ENCODE measurements at regions of chr10 and their contacts with region 1.

Region 1: DNA sequence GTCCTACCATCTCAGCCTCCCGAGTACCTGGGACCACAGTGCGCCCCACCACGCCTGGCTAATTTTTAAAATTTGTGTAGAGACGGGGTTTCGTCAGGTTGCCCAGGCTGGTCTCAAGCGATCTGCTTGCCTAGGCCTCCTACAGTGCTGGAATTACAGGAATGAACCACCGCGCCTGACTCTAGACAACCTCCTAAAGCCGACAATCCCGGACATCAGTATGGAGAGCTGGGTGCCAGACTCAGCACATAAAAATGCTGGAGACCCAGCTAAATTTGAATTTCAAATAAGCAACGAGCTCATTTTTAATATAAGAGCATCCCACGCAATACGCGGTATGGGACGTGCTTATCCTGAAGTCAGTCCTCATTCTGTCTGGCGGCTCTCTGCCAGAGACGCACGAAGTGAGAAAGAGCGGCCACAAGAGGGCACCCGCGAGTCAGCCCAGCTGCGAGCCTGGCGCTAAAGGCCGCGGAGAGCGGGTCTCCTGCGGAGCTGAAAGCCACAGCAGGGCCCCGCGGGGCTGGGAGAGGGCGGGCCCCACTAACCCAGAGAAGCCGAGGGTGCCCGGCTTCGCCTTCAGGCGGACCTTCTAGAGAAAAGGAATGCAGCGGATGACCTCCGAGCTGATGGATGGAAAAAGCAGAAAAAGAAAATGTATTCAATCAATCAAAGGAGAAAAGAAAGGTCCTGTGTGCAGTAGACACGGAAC is 7.0 kb downstream of the CALY start:
- DNase-seq: peak; percentile 90
- H3K4me3 Mint-ChIP-seq: peak overlapping the region; percentile 21
- H3K27ac Mint-ChIP-seq: peak overlapping the region; percentile 80
- H3K4me1 Mint-ChIP-seq: peaks cover 9% of the 10 kb centered on the region
- H3K27me3 Mint-ChIP-seq: peaks cover 87% of the 10 kb centered on the region

Region 2: DNA sequence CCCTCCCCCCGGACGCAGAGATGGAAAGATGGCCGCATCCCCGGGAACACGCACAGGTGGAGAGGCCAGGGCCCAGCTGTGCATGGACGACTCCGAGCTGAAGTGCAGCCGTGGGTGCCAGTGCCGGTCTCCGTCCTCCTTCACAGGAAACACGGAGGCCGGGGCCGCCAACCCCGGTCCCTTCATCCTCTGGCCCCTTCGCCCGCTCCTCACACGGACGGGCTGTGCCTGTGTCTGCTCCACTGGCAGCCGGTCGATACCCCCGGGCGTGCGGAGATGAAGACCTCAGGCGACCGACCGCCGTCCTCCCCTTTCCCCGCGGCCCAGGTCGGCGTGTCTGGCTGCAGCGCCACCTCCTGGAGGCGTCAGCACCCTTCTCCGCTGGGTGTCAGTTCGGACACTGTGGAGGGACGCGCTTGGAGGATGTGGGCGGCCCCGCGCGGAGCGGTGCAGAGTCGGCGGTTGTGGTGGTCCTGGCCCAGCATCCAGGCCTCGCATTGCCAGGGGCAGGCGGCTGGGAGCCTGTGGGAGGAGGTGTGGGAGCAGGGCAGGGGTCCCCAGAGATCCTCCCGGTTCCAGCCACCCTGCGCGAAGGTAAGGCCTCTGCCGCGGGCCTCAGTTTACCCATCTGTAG is 11.0 kb before region 1 on chr10:
- CTCF ChIA-PET with region 1: interaction called, 10 read pairs
- DNase-seq: peak; percentile 78
- H3K4me3 Mint-ChIP-seq: peak overlapping the region; percentile 35
- H3K27ac Mint-ChIP-seq: no peak overlapping the region
- H3K4me1 Mint-ChIP-seq: peaks cover 8% of the 10 kb centered on the region
- H3K27me3 Mint-ChIP-seq: peaks cover 20% of the 10 kb centered on the region

Region 3: GRCh38 chr10:133351408-133352318 is 22.0 kb after region 1 on chr10:
- CTCF ChIA-PET with region 1: interaction called, 12 read pairs
- DNase-seq: no peak
- H3K4me3 Mint-ChIP-seq: no peak overlapping the region
- H3K27ac Mint-ChIP-seq: no peak overlapping the region
- H3K4me1 Mint-ChIP-seq: peaks cover 3% of the 10 kb centered on the region
- H3K27me3 Mint-ChIP-seq: peaks cover 25% of the 10 kb centered on the region

Region 4: GRCh38 chr10:133400624-133401424 is 71.2 kb after region 1 on chr10:
- CTCF ChIA-PET with region 1: interaction called, 10 read pairs
- DNase-seq: peak; percentile 40
- H3K4me3 Mint-ChIP-seq: no peak overlapping the region
- H3K27ac Mint-ChIP-seq: peak overlapping the region; percentile 86
- H3K4me1 Mint-ChIP-seq: peaks cover 52% of the 10 kb centered on the region
- H3K27me3 Mint-ChIP-seq: no peaks in the 10 kb centered on the region

Region 5: DNA sequence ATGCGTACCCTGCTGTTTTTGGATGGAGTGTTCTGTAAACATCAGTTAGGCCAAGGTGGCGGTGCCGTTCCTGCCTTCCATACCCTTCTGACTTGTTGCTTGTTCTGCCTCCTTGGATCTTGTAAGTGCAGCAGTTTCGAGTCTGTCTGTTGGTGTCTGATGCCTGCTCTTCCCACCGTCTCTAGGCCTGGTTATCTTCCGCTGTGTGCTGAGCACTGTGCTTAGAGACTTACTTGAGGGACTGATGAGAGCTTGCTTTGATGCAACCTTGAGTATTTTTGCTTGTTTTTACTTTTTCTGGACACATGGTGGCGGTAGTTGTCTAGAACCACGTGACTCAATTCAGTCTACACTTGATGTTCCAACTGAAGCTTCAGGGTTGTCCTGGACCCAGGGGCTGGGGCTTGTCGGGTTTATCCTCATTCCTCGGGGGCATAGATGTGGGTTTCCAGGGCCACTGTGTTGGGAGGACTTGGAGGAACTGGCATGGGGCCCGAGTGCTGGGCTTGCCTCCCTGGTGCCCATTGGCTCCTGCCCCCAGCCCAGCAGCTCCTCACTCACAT is 109.1 kb after region 1 on chr10:
- CTCF ChIA-PET with region 1: interaction called, 10 read pairs
- DNase-seq: no peak
- H3K4me3 Mint-ChIP-seq: no peak overlapping the region
- H3K27ac Mint-ChIP-seq: no peak overlapping the region
- H3K4me1 Mint-ChIP-seq: peaks cover 16% of the 10 kb centered on the region
- H3K27me3 Mint-ChIP-seq: no peaks in the 10 kb centered on the region

Measured in activated naive CD4-positive, alpha-beta T cell treated with anti-CD3 and anti-CD28 coated beads, Interleukin-2, amount 10 ng/mL, durations not matched to agents 7 days and 5 days (primary cell).